WTC11 (cell line): ENCODE measurements at regions of chr15 and their contacts with region 1.

Region 1: GRCh38 chr15:96356494-96357455 is 26.3 kb downstream of the NR2F2 start:
- DNase-seq: peak; percentile 85
- ATAC-seq: peak; percentile 1; the same call in 1 of the 2 replicates
- H3K4me3 Mint-ChIP-seq: peak overlapping the region; percentile 71
- H3K27ac Mint-ChIP-seq: no peak overlapping the region
- H3K4me1 Mint-ChIP-seq: peaks cover 54% of the 10 kb centered on the region
- H3K27me3 Mint-ChIP-seq: no peaks in the 10 kb centered on the region; the same call in 1 of the 2 replicates
- CTCF ChIP-seq: peak; percentile 98

Region 2: GRCh38 chr15:96300836-96301235 is 55.9 kb before region 1 on chr15:
- CTCF ChIA-PET with region 1: no interaction called
- POLR2A ChIA-PET with region 1: no interaction called
- DNase-seq: no peak
- ATAC-seq: no peak
- H3K4me3 Mint-ChIP-seq: no peak overlapping the region
- H3K27ac Mint-ChIP-seq: no peak overlapping the region
- H3K4me1 Mint-ChIP-seq: peaks cover 19% of the 10 kb centered on the region
- H3K27me3 Mint-ChIP-seq: peaks cover 10% of the 10 kb centered on the region
- CTCF ChIP-seq: no peak

Region 3: GRCh38 chr15:96312639-96313335 is 44.0 kb before region 1 on chr15:
- CTCF ChIA-PET with region 1: no interaction called
- POLR2A ChIA-PET with region 1: no interaction called
- DNase-seq: no peak
- ATAC-seq: no peak
- H3K4me3 Mint-ChIP-seq: no peak overlapping the region
- H3K27ac Mint-ChIP-seq: no peak overlapping the region
- H3K4me1 Mint-ChIP-seq: peaks cover 23% of the 10 kb centered on the region
- H3K27me3 Mint-ChIP-seq: peaks cover 35% of the 10 kb centered on the region
- CTCF ChIP-seq: no peak

Region 4: GRCh38 chr15:96345560-96346399 is 11.0 kb before region 1 on chr15:
- CTCF ChIA-PET with region 1: interaction called, 17 read pairs
- POLR2A ChIA-PET with region 1: no interaction called
- DNase-seq: peak; percentile 49
- ATAC-seq: peak; percentile 23
- H3K4me3 Mint-ChIP-seq: peak overlapping the region; percentile 81
- H3K27ac Mint-ChIP-seq: no peak overlapping the region
- H3K4me1 Mint-ChIP-seq: peaks cover 82% of the 10 kb centered on the region
- H3K27me3 Mint-ChIP-seq: no peaks in the 10 kb centered on the region; the same call in 1 of the 2 replicates
- CTCF ChIP-seq: no peak

Region 5: DNA sequence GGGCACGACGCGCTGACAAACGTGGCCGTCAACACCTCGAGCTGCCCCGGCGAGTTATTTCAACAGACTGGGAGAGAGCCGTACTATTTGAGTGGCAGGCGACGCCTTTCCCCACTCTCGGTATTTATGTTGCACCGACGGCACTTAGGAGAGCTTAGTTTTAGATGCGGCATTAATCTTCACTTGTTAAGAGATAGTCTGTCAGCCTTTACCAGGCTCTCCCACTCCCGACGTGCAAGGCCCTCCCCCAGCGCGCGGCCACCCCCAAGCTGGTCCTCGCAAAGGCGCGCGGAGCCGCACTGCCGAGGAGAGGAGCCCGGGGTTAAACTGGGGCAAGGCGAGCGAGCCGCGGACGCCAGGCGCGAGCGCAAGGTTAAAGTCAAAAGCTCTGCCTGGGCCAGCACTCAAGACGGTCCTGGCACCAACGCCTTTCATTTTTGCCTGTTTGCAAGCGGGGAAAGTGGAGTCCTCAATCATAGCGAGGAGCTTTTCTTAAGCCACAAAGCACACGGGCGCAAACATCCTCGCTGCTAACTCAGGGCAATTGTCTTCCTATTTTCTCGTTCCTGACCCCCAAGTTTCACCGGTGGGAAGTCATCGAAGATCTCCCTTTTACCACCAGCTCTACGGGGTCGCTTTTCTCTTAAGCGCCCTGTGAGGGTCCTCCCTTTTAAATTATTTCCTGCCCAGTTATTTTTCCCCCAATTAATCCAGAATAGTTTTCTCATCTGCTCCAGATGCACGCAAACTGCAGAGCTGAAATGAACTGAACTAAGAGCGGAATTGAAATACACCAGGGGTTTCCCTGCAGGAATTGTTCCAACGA is 60.4 kb after region 1 on chr15:
- CTCF ChIA-PET with region 1: interaction called, 11 read pairs
- POLR2A ChIA-PET with region 1: no interaction called
- DNase-seq: peak; percentile 59
- ATAC-seq: peak; percentile 61
- H3K4me3 Mint-ChIP-seq: peak overlapping the region; percentile 54
- H3K27ac Mint-ChIP-seq: no peak overlapping the region
- H3K4me1 Mint-ChIP-seq: peaks cover 61% of the 10 kb centered on the region
- H3K27me3 Mint-ChIP-seq: peaks cover 100% of the 10 kb centered on the region
- CTCF ChIP-seq: no peak

Region 6: DNA sequence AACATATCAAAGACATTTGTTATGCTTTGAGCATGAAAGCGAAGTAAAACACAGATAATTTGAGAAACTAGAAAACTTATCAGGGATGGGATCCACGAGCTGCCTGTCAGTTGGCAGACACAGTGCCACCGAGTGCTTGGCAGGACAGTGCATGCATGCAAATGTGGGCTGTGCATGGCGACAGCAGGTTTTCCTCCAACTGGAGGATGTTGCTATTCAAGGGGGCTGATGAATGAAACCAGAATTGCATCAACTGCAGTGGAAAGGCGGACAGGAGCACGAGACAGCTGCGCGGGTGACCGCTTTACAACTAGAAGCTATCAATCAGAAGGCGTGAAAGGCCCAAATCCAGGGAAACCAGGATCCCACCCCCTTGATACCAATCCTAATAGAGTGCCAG is 218.0 kb after region 1 on chr15:
- CTCF ChIA-PET with region 1: no interaction called
- POLR2A ChIA-PET with region 1: no interaction called
- DNase-seq: no peak
- ATAC-seq: no peak
- H3K4me3 Mint-ChIP-seq: no peak overlapping the region
- H3K27ac Mint-ChIP-seq: no peak overlapping the region
- H3K4me1 Mint-ChIP-seq: peaks cover under 1% of the 10 kb centered on the region; the same call in 1 of the 2 replicates
- H3K27me3 Mint-ChIP-seq: no peaks in the 10 kb centered on the region
- CTCF ChIP-seq: no peak